Mammary epithelial cell (primary cell): ENCODE measurements at regions of chr3 and their contacts with region 1.

Region 1: GRCh38 chr3:23776352-23776891 is 29.3 kb upstream of the UBE2E1 start:
- DNase-seq: peak; percentile 50
- H3K4me3 ChIP-seq: no peak overlapping the region
- H3K27ac ChIP-seq: no peak overlapping the region
- H3K4me1 ChIP-seq: no peaks in the 10 kb centered on the region
- H3K27me3 ChIP-seq: peaks cover 1% of the 10 kb centered on the region
- CTCF ChIP-seq: no peak

Region 2: GRCh38 chr3:23271886-23272741 is 504.3 kb before region 1 on chr3:
- CTCF ChIA-PET with region 1: interaction called, 18 read pairs
- dilution Hi-C with region 1: no loop called
- in situ Hi-C with region 1: no loop called
- intact Hi-C with region 1: no loop called
- DNase-seq: no peak
- H3K4me3 ChIP-seq: no peak overlapping the region
- H3K27ac ChIP-seq: no peak overlapping the region
- H3K4me1 ChIP-seq: no peaks in the 10 kb centered on the region
- H3K27me3 ChIP-seq: no peaks in the 10 kb centered on the region
- CTCF ChIP-seq: no peak

Region 3: GRCh38 chr3:23444855-23445254 is 331.6 kb before region 1 on chr3:
- CTCF ChIA-PET with region 1: no interaction called
- dilution Hi-C with region 1: no loop called
- in situ Hi-C with region 1: no loop called
- intact Hi-C with region 1: no loop called
- DNase-seq: no peak
- H3K4me3 ChIP-seq: no peak overlapping the region
- H3K27ac ChIP-seq: no peak overlapping the region
- H3K4me1 ChIP-seq: no peaks in the 10 kb centered on the region
- H3K27me3 ChIP-seq: no peaks in the 10 kb centered on the region
- CTCF ChIP-seq: no peak

Region 4: DNA sequence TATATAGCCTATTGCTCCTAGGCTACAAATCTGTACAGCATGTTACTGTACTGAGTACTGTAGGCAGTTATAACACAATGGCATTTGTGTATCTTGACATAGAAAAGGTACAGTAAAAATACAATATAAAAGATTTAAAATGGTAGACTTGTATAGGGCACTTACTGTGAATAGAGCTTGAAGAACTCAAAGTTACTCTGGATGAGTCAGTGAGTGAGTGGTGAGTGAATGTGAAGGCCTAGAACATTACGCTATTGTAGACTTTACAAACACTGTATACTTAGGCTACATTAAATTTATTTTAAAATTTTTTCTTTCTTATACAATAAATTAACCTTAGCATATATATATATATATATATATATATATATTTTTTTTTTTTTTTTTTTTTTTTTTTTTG is 110.7 kb before region 1 on chr3:
- CTCF ChIA-PET with region 1: interaction called, 10 read pairs
- dilution Hi-C with region 1: no loop called
- in situ Hi-C with region 1: no loop called
- intact Hi-C with region 1: no loop called
- DNase-seq: peak; percentile 30
- H3K4me3 ChIP-seq: no peak overlapping the region
- H3K27ac ChIP-seq: no peak overlapping the region
- H3K4me1 ChIP-seq: peaks cover 27% of the 10 kb centered on the region
- H3K27me3 ChIP-seq: no peaks in the 10 kb centered on the region
- CTCF ChIP-seq: no peak

Region 5: GRCh38 chr3:23735535-23736326 is 40.7 kb before region 1 on chr3:
- CTCF ChIA-PET with region 1: no interaction called
- dilution Hi-C with region 1: no loop called
- in situ Hi-C with region 1: no loop called
- intact Hi-C with region 1: no loop called
- DNase-seq: no peak
- H3K4me3 ChIP-seq: no peak overlapping the region
- H3K27ac ChIP-seq: no peak overlapping the region
- H3K4me1 ChIP-seq: peaks cover 24% of the 10 kb centered on the region
- H3K27me3 ChIP-seq: no peaks in the 10 kb centered on the region
- CTCF ChIP-seq: no peak